ENCODE measurements at regions of chr18 and their contacts with region 1.

Region 1: GRCh38 chr18:3593904-3594661 is 144.1 kb downstream of the TGIF1 start:
- DNase-seq: peak; percentile 71 to 93
- ATAC-seq: peak; percentile 87 to 93 (median 89)
- H3K4me3 ChIP-seq: peak overlapping the region; percentile 16 to 71 (median 54)
- H3K27ac ChIP-seq: peak overlapping the region; percentile 93 to 99 (median 97)
- H3K4me1 ChIP-seq: peaks cover 14 to 60% (median 44%) of the 10 kb centered on the region in 9 donors
- H3K27me3 ChIP-seq: no peaks in the 10 kb centered on the region
- CTCF ChIP-seq: peak; percentile 75 to 88 (median 86)

Region 2: DNA sequence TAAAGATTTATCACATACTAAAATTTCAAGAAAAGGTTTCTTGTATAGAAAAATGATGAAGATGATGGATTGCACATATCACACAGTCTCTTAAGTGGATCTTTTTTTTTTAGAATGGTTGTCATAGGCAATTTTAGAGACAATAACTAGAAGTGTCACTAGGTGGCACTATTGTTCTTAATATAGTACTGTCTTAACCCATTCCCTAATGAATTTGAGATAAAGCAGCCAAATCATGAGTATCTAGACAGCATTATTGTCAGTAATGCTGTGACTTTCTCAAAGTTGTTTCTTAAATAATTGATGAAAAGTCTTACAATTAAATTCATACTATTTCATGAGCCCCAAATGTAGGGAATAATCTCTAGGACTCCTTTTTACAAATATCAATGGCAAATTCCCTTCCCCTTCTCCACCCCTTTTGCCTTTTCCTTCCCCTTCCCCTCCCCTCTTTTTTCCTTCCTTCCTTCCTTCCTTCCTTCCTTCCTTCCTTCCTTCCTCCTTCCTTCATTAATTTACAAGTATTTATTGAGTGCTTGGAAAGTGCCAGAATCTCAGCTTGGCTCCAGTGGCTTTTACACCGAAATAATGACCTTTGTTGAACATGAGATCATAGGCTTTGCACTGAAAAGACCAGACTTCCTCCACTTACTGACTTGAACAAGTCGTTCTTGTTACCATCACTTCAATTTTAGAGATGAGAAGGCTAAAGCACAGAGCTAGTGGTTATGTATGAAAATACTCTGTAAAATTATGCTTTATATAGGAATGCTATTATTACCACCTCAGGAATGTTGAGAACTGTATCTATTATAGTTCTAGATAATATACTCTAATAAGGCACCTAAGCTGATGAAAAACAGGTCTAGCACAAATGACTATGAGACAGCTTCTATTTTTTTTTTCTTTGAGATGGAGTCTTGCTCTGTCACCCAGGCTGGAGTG is 312.4 kb before region 1 on chr18:
- intact Hi-C with region 1: loop called in 9 of 10 experiments (anchors 5 to 10 kb)
- DNase-seq: peak in 1 of 2 donors; percentile 33
- ATAC-seq: peak; percentile 78 to 89 (median 86)
- H3K4me3 ChIP-seq: no peak overlapping the region
- H3K27ac ChIP-seq: peak overlapping the region in 6 of 10 donors; percentile 1 to 56 (median 32)
- H3K4me1 ChIP-seq: peaks cover 0 to 27% (median 14%) of the 10 kb centered on the region in 9 donors
- H3K27me3 ChIP-seq: no peaks in the 10 kb centered on the region
- CTCF ChIP-seq: peak; percentile 39 to 87 (median 73)

Region 3: GRCh38 chr18:3454365-3455089 is 139.6 kb before region 1 on chr18:
- intact Hi-C with region 1: loop called (anchors 2 to 10 kb)
- DNase-seq: peak in 1 of 2 donors; percentile 56
- ATAC-seq: no peak
- H3K4me3 ChIP-seq: peak overlapping the region in 9 of 10 donors; percentile 4 to 93 (median 69)
- H3K27ac ChIP-seq: peak overlapping the region in 9 of 10 donors; percentile 87 to 100 (median 97)
- H3K4me1 ChIP-seq: peaks cover 3 to 59% (median 28%) of the 10 kb centered on the region in 9 donors
- H3K27me3 ChIP-seq: no peaks in the 10 kb centered on the region
- CTCF ChIP-seq: peak; percentile 55 to 86 (median 69)

Region 4: DNA sequence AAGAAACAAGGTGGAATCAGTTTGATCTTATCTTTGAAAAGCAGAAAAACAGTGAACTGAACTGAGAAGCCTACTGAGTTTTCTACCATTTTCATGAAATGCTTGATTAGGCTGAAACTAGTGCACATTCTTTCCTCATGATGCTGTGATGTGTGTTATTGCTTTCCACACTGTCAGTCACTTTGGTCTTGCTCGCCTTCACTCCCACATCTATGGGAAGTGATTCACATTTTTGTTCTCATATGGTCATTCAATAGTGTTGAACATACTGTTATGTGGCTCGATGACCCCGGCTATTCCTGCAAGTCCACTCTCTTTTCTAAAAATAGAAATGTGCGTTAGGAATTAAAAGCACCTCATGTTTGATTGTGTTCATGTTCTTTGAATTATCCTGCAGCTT is 14.4 kb before region 1 on chr18:
- intact Hi-C with region 1: no loop called
- DNase-seq: no peak
- ATAC-seq: no peak
- H3K4me3 ChIP-seq: no peak overlapping the region
- H3K27ac ChIP-seq: no peak overlapping the region
- H3K4me1 ChIP-seq: no peaks in the 10 kb centered on the region
- H3K27me3 ChIP-seq: no peaks in the 10 kb centered on the region
- CTCF ChIP-seq: no peak

Region 5: GRCh38 chr18:3623769-3624545 is 29.9 kb after region 1 on chr18:
- intact Hi-C with region 1: loop called in 1 of 10 experiments (anchors 2 kb)
- DNase-seq: peak; percentile 70 to 78
- ATAC-seq: peak; percentile 65 to 94 (median 79)
- H3K4me3 ChIP-seq: peak overlapping the region in 6 of 10 donors; percentile 5 to 29 (median 16)
- H3K27ac ChIP-seq: peak overlapping the region; percentile 33 to 91 (median 83)
- H3K4me1 ChIP-seq: peaks cover 5 to 38% (median 29%) of the 10 kb centered on the region in 9 donors
- H3K27me3 ChIP-seq: no peaks in the 10 kb centered on the region
- CTCF ChIP-seq: no peak